Right cardiac atrium (tissue), 5 donors: ENCODE measurements at regions of chr17 and their contacts with region 1.

Region 1: GRCh38 chr17:42843358-42843934 is 934 bp upstream of the AOC2 start:
- DNase-seq: no peak
- ATAC-seq: peak; percentile 51 to 60
- H3K4me3 ChIP-seq: no peak overlapping the region
- H3K27ac ChIP-seq: no peak overlapping the region
- H3K4me1 ChIP-seq: no peaks in the 10 kb centered on the region
- H3K27me3 ChIP-seq: no peaks in the 10 kb centered on the region

Region 2: GRCh38 chr17:42937712-42938596 is 94.5 kb after region 1 on chr17:
- intact Hi-C with region 1: loop called in 3 of 4 experiments (anchors 2 to 5 kb)
- DNase-seq: peak in 2 of 3 donors; percentile 28 to 57
- ATAC-seq: peak; percentile 68 to 76
- H3K4me3 ChIP-seq: no peak overlapping the region
- H3K27ac ChIP-seq: no peak overlapping the region
- H3K4me1 ChIP-seq: no peaks in the 10 kb centered on the region
- H3K27me3 ChIP-seq: no peaks in the 10 kb centered on the region

Region 3: DNA sequence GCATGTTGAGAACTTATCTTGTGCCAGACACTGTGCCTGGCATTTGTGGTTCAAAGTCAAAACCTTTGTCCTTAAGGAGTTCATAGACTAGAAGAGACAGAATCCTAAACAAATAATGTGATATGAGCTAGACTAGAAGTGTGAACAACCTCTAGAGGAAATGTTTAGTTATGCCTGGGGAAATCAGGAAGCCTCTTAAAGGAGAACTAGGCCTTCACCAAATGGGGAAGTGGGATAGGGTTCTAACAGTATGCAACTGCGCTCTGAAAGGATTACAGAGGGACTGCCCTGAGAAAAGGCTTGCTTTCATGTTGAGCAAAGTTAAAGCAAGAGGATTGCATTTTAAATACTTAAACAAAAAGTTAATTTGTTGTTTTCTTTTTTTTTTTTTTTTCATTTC is 141.8 kb after region 1 on chr17:
- intact Hi-C with region 1: no loop called
- DNase-seq: no peak
- ATAC-seq: no peak
- H3K4me3 ChIP-seq: no peak overlapping the region
- H3K27ac ChIP-seq: no peak overlapping the region
- H3K4me1 ChIP-seq: no peaks in the 10 kb centered on the region
- H3K27me3 ChIP-seq: no peaks in the 10 kb centered on the region

Region 4: GRCh38 chr17:43104665-43105064 is 261.2 kb after region 1 on chr17:
- intact Hi-C with region 1: no loop called
- DNase-seq: no peak
- ATAC-seq: no peak
- H3K4me3 ChIP-seq: no peak overlapping the region
- H3K27ac ChIP-seq: no peak overlapping the region
- H3K4me1 ChIP-seq: no peaks in the 10 kb centered on the region
- H3K27me3 ChIP-seq: no peaks in the 10 kb centered on the region